Kidney (tissue), 22 donors: ENCODE measurements at regions of chr1 and their contacts with region 1.

Region 1: GRCh38 chr1:181088079-181089016 is at the start of gene IER5:
- DNase-seq: peak; percentile 97 to 99 (median 98)
- H3K4me3 ChIP-seq: peak within 1 kb of the TSS; percentile 80 to 87 (median 84)
- H3K27ac ChIP-seq: peak within 1 kb of the TSS; percentile 83 to 91
- H3K4me1 ChIP-seq: peaks cover 3 to 6% (median 5%) of the 10 kb centered on the region in 3 donors
- H3K27me3 ChIP-seq: no peaks in the 10 kb centered on the region
- CTCF ChIP-seq: no peak
- total RNA-seq, gene IER5: 11.0 TPM

Region 2: DNA sequence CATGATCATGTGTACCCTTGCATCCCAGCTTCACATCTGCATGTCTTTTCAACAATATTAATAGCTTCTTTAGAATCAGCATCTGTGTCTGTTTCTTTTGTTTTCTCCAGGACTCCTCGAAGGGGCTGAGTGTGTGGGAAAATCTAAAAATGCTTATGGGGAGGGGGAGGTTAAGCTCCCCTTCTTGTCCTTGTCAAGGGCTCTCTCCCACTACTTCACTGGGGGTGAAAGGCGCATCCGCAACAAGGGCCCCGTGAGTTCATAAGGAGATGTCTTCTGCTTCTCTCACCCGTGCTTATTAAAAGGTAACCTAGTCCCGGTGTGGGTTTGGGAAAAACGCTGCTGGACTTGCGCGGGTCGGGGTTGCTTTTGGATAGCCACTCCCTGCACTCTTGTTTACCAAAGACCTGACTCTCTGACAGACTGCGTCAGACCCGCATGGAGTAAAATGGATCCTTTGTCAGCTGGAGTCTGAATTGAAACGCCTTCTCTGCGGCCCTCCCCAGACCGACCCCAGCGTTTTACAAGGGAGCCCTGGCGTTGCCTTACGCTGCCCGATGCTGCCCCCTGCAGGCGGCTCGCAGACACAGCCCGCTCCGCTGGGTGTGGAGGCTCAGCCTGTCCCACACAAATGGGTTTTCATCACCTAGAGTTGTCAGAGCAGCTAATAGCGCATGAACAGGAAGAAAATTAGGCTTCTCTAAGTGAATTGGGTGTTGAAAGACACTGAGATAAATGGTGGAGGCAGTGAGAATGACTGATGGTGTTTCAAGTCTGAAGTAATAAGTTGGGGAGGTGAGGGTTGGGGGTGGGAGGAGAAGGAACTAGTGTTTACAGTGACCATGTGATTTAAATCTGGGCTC is 54.0 kb after region 1 on chr1:
- intact Hi-C with region 1: loop called (anchors 10 kb)
- DNase-seq: peak; percentile 91 to 95 (median 93)
- H3K4me3 ChIP-seq: peak overlapping the region; percentile 35 to 64 (median 54)
- H3K27ac ChIP-seq: no peak overlapping the region
- H3K4me1 ChIP-seq: peaks cover 0 to 7% (median 0%) of the 10 kb centered on the region in 3 donors
- H3K27me3 ChIP-seq: no peaks in the 10 kb centered on the region
- CTCF ChIP-seq: peak; percentile 98

Region 3: GRCh38 chr1:181369416-181369815 is 281.1 kb after region 1 on chr1:
- intact Hi-C with region 1: no loop called
- DNase-seq: no peak
- H3K4me3 ChIP-seq: no peak overlapping the region
- H3K27ac ChIP-seq: no peak overlapping the region
- H3K4me1 ChIP-seq: no peaks in the 10 kb centered on the region
- H3K27me3 ChIP-seq: no peaks in the 10 kb centered on the region
- CTCF ChIP-seq: no peak